CD8-positive, alpha-beta T cell (primary cell): ENCODE measurements at regions of chr6 and their contacts with region 1.

Region 1: DNA sequence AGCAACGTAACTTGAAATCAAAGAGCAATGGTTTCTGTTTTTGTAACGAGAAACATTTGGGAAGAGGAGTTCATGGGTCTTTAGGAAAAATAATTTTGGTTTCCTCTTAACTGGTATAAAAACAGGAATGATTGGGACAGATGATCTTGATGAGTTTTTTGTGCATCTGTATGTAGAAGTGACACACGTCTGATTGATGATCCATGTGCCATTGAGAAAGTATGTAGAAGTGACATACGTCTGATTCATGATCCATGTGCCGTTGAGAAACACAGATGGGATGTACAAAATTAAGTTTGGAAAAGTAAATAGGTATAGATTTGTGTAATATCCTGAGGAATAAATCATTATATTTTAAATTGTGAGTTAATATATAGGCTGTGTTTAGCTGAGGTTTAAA is 2.1 kb downstream of the KIAA1586 start:
- DNase-seq: no peak
- ATAC-seq: no peak
- H3K4me3 ChIP-seq: no peak overlapping the region
- H3K4me3 Mint-ChIP-seq: no peak overlapping the region
- H3K27ac ChIP-seq: no peak overlapping the region
- H3K27ac Mint-ChIP-seq: no peak overlapping the region
- H3K4me1 ChIP-seq: peaks cover 9% of the 10 kb centered on the region
- H3K4me1 Mint-ChIP-seq: peaks cover 27% of the 10 kb centered on the region
- H3K27me3 ChIP-seq: no peaks in the 10 kb centered on the region
- H3K27me3 Mint-ChIP-seq: no peaks in the 10 kb centered on the region
- CTCF ChIP-seq: no peak

Region 2: DNA sequence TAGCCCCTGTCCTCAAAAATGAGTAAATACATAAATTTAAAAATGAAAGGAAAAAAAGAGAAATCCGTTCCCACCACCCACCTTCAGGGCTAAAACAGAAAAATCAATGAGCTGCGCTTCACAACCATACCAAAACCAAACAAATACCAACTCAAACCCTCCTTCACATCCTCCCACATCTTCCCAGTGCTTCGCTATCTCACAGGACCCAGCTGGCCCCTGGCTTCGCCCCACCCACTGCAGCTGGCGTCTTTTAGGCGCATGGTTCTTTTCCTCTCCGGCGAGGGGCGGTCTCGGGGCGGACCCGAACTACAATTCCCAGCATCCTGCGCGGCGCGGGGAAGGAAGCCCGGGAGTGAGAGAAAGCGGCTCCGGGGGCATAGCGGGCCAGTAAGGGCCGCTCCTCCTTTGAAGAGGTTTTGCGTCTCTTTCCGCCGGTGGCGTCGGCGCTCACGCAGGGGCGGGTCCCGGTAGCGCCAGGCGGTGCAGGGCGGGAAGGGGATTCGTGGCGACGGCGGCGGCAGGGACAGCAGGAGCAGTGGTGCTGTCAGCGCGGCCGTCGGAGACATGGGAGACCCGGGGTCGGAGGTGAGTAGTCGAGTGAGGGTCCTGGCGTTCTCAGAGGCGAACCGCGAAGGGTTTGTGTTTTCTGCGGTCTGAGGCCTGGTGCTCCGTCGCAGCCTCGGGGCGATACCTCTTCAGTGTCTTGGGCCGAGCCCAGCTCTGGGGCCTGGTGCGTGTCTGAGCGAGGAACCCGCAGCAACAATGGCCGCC is 41.3 kb after region 1 on chr6 and contains the start of gene ZNF451:
- CTCF ChIA-PET with region 1: no interaction called
- POLR2A ChIA-PET with region 1: interaction called, 4 read pairs
- intact Hi-C with region 1: loop called (anchors 1 to 2 kb)
- DNase-seq: peak; percentile 92 to 98 (median 96)
- ATAC-seq: peak; percentile 91
- H3K4me3 ChIP-seq: peak within 1 kb of the TSS; percentile 59 to 82
- H3K4me3 Mint-ChIP-seq: peak within 1 kb of the TSS; percentile 90
- H3K27ac ChIP-seq: peak within 1 kb of the TSS; percentile 56 to 74
- H3K27ac Mint-ChIP-seq: peak within 1 kb of the TSS; percentile 93
- H3K4me1 ChIP-seq: peaks cover 36% of the 10 kb centered on the region
- H3K4me1 Mint-ChIP-seq: peaks cover 36% of the 10 kb centered on the region
- H3K27me3 ChIP-seq: no peaks in the 10 kb centered on the region
- H3K27me3 Mint-ChIP-seq: no peaks in the 10 kb centered on the region
- CTCF ChIP-seq: no peak
- total RNA-seq, gene ZNF451: 132 to 136 TPM

Region 3: GRCh38 chr6:57172136-57173055 is 123.8 kb after region 1 on chr6 and contains the start of gene BAG2:
- CTCF ChIA-PET with region 1: no interaction called
- POLR2A ChIA-PET with region 1: no interaction called
- intact Hi-C with region 1: loop called (anchors 5 kb)
- DNase-seq: peak; percentile 79 to 91 (median 89)
- ATAC-seq: peak; percentile 85
- H3K4me3 ChIP-seq: peak within 1 kb of the TSS; percentile 62 to 77
- H3K4me3 Mint-ChIP-seq: peak within 1 kb of the TSS; percentile 87
- H3K27ac ChIP-seq: peak within 1 kb of the TSS; percentile 62 to 83
- H3K27ac Mint-ChIP-seq: peak within 1 kb of the TSS; percentile 92
- H3K4me1 ChIP-seq: peaks cover 23% of the 10 kb centered on the region
- H3K4me1 Mint-ChIP-seq: peaks cover 47% of the 10 kb centered on the region
- H3K27me3 ChIP-seq: no peaks in the 10 kb centered on the region
- H3K27me3 Mint-ChIP-seq: no peaks in the 10 kb centered on the region
- CTCF ChIP-seq: no peak
- total RNA-seq, gene BAG2: 4.6 to 5.0 TPM

Region 4: DNA sequence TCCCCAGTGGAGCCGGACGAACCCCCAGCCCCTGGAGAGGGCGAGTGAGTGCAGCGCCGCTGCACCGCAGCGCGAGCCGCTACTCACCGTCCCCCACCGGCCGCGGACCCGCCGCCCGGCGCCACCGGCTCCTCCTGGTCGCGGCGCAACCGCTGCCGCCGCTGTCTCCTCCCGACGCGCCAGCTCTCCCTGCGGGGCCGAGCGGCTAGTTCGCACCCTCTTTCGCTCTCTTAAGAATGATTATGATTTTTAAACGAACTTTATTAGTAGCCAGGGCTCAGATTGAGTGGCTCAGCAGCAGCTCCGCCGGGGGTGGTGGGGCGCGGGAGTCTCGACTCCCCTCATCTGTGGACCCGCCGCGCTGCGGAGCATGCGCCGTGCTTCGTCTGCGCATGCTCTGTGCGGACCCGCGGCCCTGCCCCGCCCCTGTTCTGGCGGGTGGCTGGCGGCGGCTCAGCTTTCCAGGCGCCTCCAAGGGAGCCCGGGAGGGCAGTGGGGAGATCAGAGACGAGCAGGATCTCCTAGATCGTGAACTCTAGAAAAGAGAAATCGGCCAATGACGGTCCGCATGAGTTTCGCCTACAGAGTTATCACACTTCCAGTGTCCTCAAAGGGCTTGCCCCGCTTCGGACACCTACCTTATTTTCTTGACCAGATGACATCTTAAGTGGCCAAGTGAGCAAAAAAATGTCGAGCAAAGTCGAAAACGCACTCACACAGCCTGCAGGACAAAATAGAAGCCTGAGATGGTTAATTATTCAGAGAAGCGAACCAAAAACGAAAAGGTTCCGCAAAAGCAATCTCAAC is 173.6 kb after region 1 on chr6 and contains the start of gene RAB23:
- CTCF ChIA-PET with region 1: no interaction called
- POLR2A ChIA-PET with region 1: no interaction called
- intact Hi-C with region 1: loop called in 1 of 2 experiments (anchors 1 kb)
- DNase-seq: peak; percentile 66 to 92 (median 81)
- ATAC-seq: peak; percentile 90
- H3K4me3 ChIP-seq: peak within 1 kb of the TSS; percentile 88 to 94
- H3K4me3 Mint-ChIP-seq: peak within 1 kb of the TSS; percentile 97
- H3K27ac ChIP-seq: peak within 1 kb of the TSS in 1 of 2 experiments; percentile 35
- H3K27ac Mint-ChIP-seq: peak within 1 kb of the TSS; percentile 72
- H3K4me1 ChIP-seq: peaks cover 4% of the 10 kb centered on the region
- H3K4me1 Mint-ChIP-seq: peaks cover 11% of the 10 kb centered on the region
- H3K27me3 ChIP-seq: peaks cover 5 to 9% of the 10 kb centered on the region in 2 experiments
- H3K27me3 Mint-ChIP-seq: peaks cover 20% of the 10 kb centered on the region
- CTCF ChIP-seq: no peak
- total RNA-seq, gene RAB23: 0.08 TPM